Heart left ventricle (tissue), 16 donors: ENCODE measurements at regions of chr9 and their contacts with region 1.

Region 1: DNA sequence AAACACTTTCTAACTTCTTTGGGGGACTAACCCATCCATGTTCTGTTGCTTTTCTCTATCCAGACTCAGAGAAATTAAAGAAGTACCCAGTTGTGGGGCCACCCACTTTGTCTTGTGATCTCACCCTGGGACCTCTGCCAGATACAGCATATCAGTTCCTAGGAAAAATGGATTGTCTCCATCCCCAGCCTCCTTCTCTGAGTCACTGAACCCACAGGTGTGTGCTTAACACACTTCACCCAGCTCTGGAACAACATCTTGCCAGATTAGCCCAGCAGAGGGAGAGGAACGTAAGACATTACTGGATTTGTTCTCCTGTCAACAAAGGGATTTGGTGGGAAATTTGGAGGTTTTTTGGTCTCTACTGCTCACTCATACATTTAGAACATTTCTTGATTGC is 19.2 kb downstream of the FAM240B start:
- DNase-seq: no peak
- ATAC-seq: no peak
- H3K4me3 ChIP-seq: no peak overlapping the region
- H3K27ac ChIP-seq: no peak overlapping the region
- H3K4me1 ChIP-seq: no peaks in the 10 kb centered on the region
- H3K27me3 ChIP-seq: no peaks in the 10 kb centered on the region
- CTCF ChIP-seq: no peak
- POLR2A ChIP-seq: no peak

Region 2: GRCh38 chr9:38626006-38626405 is 74.7 kb before region 1 on chr9:
- intact Hi-C with region 1: no loop called
- DNase-seq: no peak
- ATAC-seq: no peak
- H3K4me3 ChIP-seq: no peak overlapping the region
- H3K27ac ChIP-seq: no peak overlapping the region
- H3K4me1 ChIP-seq: peaks cover 0 to 19% (median 6%) of the 10 kb centered on the region in 12 donors
- H3K27me3 ChIP-seq: peaks cover 8 to 40% (median 18%) of the 10 kb centered on the region in 9 donors
- CTCF ChIP-seq: no peak
- POLR2A ChIP-seq: no peak

Region 3: GRCh38 chr9:38747067-38747466 is 46.4 kb after region 1 on chr9:
- intact Hi-C with region 1: loop called in 2 of 10 experiments (anchors 5 to 10 kb)
- DNase-seq: no peak
- ATAC-seq: no peak
- H3K4me3 ChIP-seq: no peak overlapping the region
- H3K27ac ChIP-seq: no peak overlapping the region
- H3K4me1 ChIP-seq: no peaks in the 10 kb centered on the region
- H3K27me3 ChIP-seq: no peaks in the 10 kb centered on the region
- CTCF ChIP-seq: no peak
- POLR2A ChIP-seq: no peak

Region 4: DNA sequence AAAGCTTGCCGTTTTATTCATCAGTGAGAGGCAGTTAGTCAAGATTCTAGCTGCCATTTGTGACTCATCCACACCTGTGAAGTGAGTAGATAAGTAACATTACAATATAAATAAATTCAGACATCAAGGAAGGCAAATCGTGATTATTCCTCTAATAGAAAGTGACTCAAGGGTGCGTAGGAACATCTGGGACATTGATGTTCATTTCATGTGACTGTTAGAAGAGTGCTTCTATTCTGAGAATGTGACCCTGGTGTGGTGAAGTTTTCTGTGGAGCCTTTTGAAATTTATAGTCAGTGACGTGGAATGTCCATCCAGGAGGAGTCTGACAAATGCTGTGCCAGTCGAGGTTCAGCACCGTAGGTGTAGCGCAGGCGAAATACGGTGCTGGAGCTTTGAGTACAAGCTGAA is 67.7 kb after region 1 on chr9:
- intact Hi-C with region 1: no loop called
- DNase-seq: no peak
- ATAC-seq: peak in 2 of 4 donors; percentile 33 to 67
- H3K4me3 ChIP-seq: no peak overlapping the region
- H3K27ac ChIP-seq: no peak overlapping the region
- H3K4me1 ChIP-seq: no peaks in the 10 kb centered on the region
- H3K27me3 ChIP-seq: no peaks in the 10 kb centered on the region
- CTCF ChIP-seq: no peak
- POLR2A ChIP-seq: no peak